OCI-LY7 (cell line): ENCODE measurements at regions of chr2 and their contacts with region 1.

Region 1: GRCh38 chr2:30282086-30282485 is 50.8 kb downstream of the LBH start:
- DNase-seq: peak; percentile 86
- H3K4me3 ChIP-seq: no peak overlapping the region
- H3K27ac ChIP-seq: no peak overlapping the region
- H3K4me1 ChIP-seq: peaks cover 28% of the 10 kb centered on the region
- CTCF ChIP-seq: no peak

Region 2: DNA sequence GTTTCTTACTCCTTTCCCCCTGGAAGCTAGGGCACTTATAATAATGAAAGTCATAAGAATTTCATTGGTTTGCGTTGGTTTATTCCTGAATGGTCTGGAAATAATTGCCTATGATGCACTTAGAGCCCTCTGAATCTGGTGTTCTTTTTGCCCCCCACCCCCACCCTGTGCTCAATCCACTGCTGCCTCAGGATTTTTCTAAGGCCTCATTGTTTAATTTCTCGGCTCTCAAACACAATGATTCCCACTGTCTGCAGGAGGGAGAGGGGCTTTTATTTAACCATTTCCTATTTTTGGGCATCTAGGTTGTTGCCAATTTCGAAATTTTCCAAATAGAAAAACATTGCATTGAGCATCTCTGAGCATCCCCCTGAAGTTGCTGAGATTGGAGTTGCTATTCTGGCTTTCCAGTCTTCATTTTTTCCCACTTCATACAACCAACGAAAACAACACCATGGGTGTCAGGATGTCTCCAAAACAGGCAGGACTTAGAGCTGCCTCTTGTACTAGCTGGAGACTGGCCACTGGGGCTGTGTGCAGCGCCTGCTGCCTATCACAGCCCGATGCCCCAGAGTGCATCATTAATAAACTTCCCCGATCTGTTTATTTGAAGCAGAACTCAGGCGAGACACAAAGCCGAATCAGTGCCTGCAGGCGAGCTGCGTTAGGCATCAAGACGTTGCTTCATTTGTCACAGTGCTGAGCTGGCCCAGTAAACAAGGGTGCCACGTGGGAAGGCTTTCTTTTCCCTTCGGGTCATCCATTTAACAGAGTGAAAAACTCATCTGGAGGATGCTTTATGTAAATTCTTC is 1206.0 kb before region 1 on chr2:
- CTCF ChIA-PET with region 1: no interaction called
- POLR2A ChIA-PET with region 1: no interaction called
- intact Hi-C with region 1: no loop called
- DNase-seq: no peak
- H3K4me3 ChIP-seq: no peak overlapping the region
- H3K27ac ChIP-seq: no peak overlapping the region
- H3K4me1 ChIP-seq: no peaks in the 10 kb centered on the region
- CTCF ChIP-seq: no peak

Region 3: GRCh38 chr2:29394981-29395350 is 887.1 kb before region 1 on chr2:
- CTCF ChIA-PET with region 1: no interaction called
- POLR2A ChIA-PET with region 1: no interaction called
- intact Hi-C with region 1: no loop called
- DNase-seq: no peak
- H3K4me3 ChIP-seq: no peak overlapping the region
- H3K27ac ChIP-seq: no peak overlapping the region
- H3K4me1 ChIP-seq: no peaks in the 10 kb centered on the region
- CTCF ChIP-seq: no peak

Region 4: DNA sequence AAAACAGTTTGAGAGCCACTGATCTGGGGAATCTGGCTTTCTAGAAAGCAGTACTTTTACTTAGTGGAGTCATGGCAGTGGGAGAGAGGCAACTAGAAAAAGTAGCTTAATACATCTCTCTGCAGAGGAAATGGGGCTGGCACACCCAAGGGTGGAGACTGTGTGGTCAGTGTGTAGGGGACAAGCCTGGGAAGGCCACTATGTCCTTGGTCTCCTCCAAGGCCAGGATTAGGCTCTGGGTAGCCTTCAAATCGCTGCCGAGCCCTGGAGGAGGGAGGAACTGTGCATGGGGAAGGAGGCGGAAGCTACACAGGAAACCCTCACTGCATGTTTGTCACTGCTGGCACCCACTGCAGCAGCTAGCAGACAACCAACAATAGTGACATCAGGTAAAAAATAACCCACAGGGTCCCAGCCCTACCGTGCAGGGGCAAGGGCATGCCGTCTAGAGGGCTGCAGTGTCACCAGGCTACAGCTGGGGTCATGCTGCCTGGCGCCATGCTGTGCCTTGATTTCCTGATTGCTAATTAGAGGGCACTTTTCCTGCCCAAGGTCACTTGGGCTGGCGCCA is 15.9 kb before region 1 on chr2:
- CTCF ChIA-PET with region 1: interaction called, 3 read pairs
- POLR2A ChIA-PET with region 1: interaction called, 30 read pairs
- intact Hi-C with region 1: no loop called
- DNase-seq: peak; percentile 67
- H3K4me3 ChIP-seq: no peak overlapping the region
- H3K27ac ChIP-seq: no peak overlapping the region
- H3K4me1 ChIP-seq: peaks cover 22% of the 10 kb centered on the region
- CTCF ChIP-seq: no peak

Region 5: DNA sequence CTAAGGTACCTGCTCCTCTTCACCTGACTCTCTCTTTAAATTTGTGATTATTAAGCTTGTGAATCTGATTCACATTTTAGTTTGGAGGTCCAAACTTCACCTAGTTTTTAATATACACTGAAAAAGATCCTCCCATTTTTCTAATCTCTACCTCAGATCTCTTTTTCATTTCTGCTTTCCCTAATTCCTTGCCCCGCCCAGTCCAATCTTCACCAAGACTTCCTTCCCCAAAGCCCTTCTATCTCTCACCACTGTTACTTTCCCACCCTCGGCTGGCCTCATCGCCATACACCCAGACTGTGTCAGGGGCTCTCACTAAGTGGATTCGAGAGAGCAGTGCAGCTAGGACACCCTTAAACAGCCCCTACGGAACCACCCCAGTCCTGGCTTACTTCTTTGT is 10.8 kb before region 1 on chr2:
- CTCF ChIA-PET with region 1: interaction called, 3 read pairs
- POLR2A ChIA-PET with region 1: interaction called, 30 read pairs
- intact Hi-C with region 1: no loop called
- DNase-seq: no peak
- H3K4me3 ChIP-seq: no peak overlapping the region
- H3K27ac ChIP-seq: no peak overlapping the region
- H3K4me1 ChIP-seq: peaks cover 14% of the 10 kb centered on the region
- CTCF ChIP-seq: no peak